A549 (cell line): ENCODE measurements at regions of chr12 and their contacts with region 1.

Region 1: DNA sequence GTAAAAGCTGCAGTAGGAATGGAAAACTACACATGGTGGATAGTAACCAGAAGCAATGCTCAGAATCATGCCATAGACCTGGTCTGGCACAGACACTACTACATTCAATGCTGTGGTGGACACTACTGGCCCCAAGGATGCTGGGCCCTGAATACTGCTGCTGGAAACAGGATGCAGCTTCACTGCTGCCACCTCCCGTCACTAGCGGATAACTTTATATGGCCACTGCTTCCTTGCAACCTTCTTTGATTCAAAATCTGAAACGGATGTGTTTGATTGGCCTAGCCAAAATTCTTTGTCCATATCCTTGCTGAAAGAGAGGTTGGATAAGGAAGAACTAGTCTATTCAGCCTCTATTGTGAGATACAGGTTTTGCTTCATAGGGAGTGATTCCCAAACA is 30.7 kb downstream of the ADCY6 start:
- DNase-seq: peak in 1 of 2 experiments; percentile 29
- ATAC-seq: peak; percentile 57 to 64; a peak in 4 of 6 replicates
- H3K4me3 ChIP-seq: no peak overlapping the region
- H3K27ac ChIP-seq: no peak overlapping the region
- H3K4me1 ChIP-seq: no peaks in the 10 kb centered on the region
- CTCF ChIP-seq: no peak
- EP300 ChIP-seq: no peak
- POLR2A ChIP-seq: no peak
- RAD21 ChIP-seq: no peak

Region 2: DNA sequence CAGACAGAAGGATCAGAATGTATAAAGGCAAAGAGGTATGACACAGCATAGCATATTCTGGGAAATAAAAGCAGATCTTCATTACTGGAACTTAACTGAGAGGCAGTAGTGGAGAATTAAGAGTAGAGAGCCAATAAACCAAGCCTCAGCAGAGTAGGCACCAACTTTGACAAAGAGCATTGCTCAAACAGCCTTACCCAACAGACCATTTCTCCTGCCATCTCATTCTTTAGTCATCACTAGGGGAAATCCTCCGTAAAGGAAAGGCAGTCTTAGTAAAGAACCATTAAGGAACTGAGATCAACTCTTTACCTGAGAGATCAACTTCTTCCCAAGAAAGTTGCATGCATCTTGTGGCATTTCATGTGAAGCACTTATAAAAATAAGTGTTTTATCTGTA is 689.0 kb before region 1 on chr12:
- CTCF ChIA-PET with region 1: no interaction called
- POLR2A ChIA-PET with region 1: no interaction called
- DNase-seq: no peak
- ATAC-seq: no peak
- H3K4me3 ChIP-seq: no peak overlapping the region
- H3K27ac ChIP-seq: no peak overlapping the region
- H3K4me1 ChIP-seq: no peaks in the 10 kb centered on the region
- CTCF ChIP-seq: no peak
- EP300 ChIP-seq: no peak
- POLR2A ChIP-seq: no peak
- RAD21 ChIP-seq: no peak

Region 3: GRCh38 chr12:48739618-48740273 is 18.5 kb before region 1 on chr12:
- CTCF ChIA-PET with region 1: interaction called, 13 read pairs
- POLR2A ChIA-PET with region 1: no interaction called
- DNase-seq: no peak
- ATAC-seq: no peak
- H3K4me3 ChIP-seq: no peak overlapping the region
- H3K27ac ChIP-seq: no peak overlapping the region
- H3K4me1 ChIP-seq: no peaks in the 10 kb centered on the region
- CTCF ChIP-seq: no peak
- EP300 ChIP-seq: no peak
- POLR2A ChIP-seq: no peak
- RAD21 ChIP-seq: no peak

Region 4: DNA sequence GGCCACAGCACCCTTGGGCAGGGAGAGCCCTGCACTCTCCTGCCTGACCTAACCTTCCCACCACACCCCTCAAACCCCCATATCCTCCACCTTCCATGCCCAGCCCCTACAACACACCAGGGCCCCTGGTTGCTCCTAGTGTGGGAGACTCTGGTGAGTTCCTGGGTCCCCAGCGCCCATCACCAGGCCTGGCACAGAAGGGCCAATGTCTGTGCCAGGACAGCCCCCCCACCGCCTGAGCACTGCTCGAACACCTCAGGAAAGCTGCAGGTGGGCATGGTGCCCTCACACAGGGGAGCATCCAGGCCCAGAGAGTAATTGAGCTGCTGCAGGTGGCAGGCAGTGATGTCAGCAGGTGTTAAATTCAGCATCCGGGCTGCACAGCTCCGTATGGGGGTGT is 15.5 kb after region 1 on chr12:
- CTCF ChIA-PET with region 1: interaction called, 82 read pairs
- POLR2A ChIA-PET with region 1: interaction called, 4 read pairs
- DNase-seq: no peak
- ATAC-seq: no peak
- H3K4me3 ChIP-seq: no peak overlapping the region
- H3K27ac ChIP-seq: no peak overlapping the region
- H3K4me1 ChIP-seq: no peaks in the 10 kb centered on the region
- CTCF ChIP-seq: no peak
- EP300 ChIP-seq: no peak
- POLR2A ChIP-seq: no peak
- RAD21 ChIP-seq: no peak

Region 5: DNA sequence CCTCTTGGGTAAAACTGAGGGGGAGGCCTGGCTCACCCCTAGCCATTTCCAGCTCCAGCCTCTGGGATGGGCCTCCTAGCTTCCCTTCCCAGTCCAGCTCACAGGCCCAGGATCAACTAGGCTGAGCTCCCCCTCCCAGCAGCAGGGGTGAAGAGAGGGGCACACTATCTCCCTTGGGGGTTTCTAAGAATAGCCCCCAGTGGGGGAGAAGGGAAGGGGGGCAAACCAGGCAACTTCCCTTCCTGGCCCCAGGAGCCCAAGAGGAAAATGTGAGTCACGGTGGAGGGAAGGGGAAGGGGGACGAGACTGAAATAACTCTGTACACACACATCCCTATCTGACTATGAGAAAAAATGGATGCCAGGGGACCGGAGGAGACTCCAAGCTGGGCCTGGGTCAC is 21.6 kb after region 1 on chr12:
- CTCF ChIA-PET with region 1: interaction called, 28 read pairs
- POLR2A ChIA-PET with region 1: interaction called, 4 read pairs
- DNase-seq: no peak
- ATAC-seq: no peak
- H3K4me3 ChIP-seq: no peak overlapping the region
- H3K27ac ChIP-seq: no peak overlapping the region
- H3K4me1 ChIP-seq: no peaks in the 10 kb centered on the region
- CTCF ChIP-seq: no peak
- EP300 ChIP-seq: no peak
- POLR2A ChIP-seq: no peak
- RAD21 ChIP-seq: no peak

Region 6: GRCh38 chr12:48788854-48789796 is 30.9 kb after region 1 on chr12 and contains the start of gene ADCY6:
- CTCF ChIA-PET with region 1: interaction called, 265 read pairs
- POLR2A ChIA-PET with region 1: interaction called, 4 read pairs
- DNase-seq: peak; percentile 72 to 79
- ATAC-seq: peak; percentile 75 to 84
- H3K4me3 ChIP-seq: peak within 1 kb of the TSS; percentile 97
- H3K27ac ChIP-seq: peak within 1 kb of the TSS; percentile 97 to 99
- H3K4me1 ChIP-seq: peaks cover 23% of the 10 kb centered on the region
- CTCF ChIP-seq: no peak
- EP300 ChIP-seq: no peak
- POLR2A ChIP-seq: peak; percentile 36; the same call in 1 of the 2 replicates
- RAD21 ChIP-seq: no peak
- polyA plus RNA-seq, gene ADCY6: 16.3 and 20.9 TPM in 2 replicates